Psoas muscle (tissue), 8 donors: ENCODE measurements at regions of chr17 and their contacts with region 1.

Region 1: DNA sequence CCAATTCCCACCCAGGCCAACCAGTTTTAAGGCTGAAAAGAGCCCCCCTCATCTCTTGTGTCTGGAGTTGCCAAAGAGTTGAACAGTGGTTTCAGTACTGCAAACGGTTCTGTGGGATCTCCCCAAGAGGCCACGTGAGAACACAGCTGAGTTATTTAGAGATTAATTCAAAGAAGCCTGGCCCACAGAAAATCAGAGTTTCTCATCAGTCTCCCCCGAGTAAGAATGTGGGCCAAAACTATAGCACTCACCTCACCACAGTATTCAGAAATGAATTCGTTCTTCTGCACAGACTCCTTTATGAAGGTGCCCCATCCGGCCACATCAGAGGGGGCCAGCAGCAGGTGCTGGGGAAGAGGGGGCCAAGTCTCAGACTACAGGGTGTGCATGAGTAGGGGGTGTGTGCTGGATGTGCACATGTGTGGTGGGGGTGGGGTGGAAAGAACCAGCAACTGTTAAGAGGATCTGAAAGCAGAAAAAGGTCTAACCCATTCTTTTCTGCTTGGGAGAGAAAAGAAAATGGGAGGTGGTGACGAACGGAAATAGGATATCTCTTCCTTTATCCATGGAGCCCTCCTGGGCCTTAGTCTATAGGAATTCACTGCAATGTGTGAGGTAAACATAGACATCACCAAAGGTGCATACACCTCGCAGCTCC is 22.6 kb downstream of the CNTNAP1 start:
- DNase-seq: no peak
- ATAC-seq: no peak
- H3K4me3 ChIP-seq: no peak overlapping the region
- H3K27ac ChIP-seq: no peak overlapping the region
- H3K4me1 ChIP-seq: no peaks in the 10 kb centered on the region
- H3K27me3 ChIP-seq: no peaks in the 10 kb centered on the region
- CTCF ChIP-seq: no peak

Region 2: DNA sequence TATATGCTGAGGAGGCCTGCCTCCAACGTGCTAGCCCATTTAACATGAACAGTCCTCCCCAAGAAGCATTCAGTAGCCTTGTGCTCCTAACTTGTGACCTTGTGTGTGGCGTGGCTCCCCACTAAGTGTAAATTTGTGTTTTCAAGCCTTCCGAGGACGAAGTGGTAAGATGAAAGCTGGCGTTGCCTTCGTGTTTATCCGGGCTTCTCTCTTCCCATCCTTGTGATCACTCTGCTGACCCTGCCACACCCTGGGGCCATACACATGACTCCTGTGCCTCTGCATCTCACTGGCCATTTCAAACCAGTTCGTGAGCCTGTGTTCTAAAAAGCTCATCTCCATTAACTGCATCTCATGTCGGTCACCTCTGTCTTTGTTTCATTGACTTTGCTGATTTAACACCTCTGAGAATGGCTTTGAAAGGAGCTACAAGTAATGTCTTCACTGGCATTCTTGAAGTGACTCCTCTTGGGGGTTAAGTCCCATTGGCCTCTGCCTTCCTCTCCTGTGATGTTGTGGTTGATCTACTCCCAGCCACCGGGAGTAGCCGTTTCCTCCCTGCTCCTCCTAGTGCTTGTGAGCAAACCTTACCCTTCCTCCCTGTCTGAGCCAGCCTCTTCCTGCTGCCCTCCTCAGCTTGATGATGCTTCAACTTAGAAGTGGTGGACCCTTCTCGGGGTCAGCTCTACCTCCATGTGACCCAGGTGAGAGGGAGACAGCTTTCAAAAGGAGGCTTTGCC is 196.4 kb before region 1 on chr17:
- intact Hi-C with region 1: loop called in 1 of 2 experiments (anchors 10 kb)
- DNase-seq: no peak
- ATAC-seq: no peak
- H3K4me3 ChIP-seq: no peak overlapping the region
- H3K27ac ChIP-seq: no peak overlapping the region
- H3K4me1 ChIP-seq: no peaks in the 10 kb centered on the region
- H3K27me3 ChIP-seq: no peaks in the 10 kb centered on the region
- CTCF ChIP-seq: no peak